ENCODE measurements at regions of chr10 and their contacts with region 1.

Region 1: GRCh38 chr10:67666416-67667034 is 29.5 kb downstream of the CTNNA3 start:
- DNase-seq: no peak
- ATAC-seq: peak; percentile 56 to 59
- H3K4me3 ChIP-seq: no peak overlapping the region
- H3K27ac ChIP-seq: no peak overlapping the region
- H3K4me1 ChIP-seq: peaks cover 2% of the 10 kb centered on the region
- H3K27me3 ChIP-seq: no peaks in the 10 kb centered on the region

Region 2: DNA sequence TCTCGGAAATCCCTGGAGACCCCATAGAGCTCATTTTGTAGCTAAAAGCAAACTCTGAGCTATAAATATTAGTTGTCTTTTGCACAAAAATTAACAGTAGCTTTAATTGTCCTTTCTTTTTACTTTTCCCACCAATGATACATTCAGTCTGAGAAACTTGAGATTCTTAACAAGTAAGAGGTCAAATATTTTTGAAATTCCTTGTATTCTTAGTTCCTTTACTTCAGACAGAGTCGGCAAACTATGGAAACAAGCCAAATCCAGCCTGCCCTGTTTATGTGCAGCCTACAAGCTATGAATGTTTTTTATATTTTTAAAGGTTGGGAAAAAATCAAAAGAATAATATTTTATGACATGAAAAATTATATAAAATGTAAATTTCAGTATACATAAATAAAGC is 117.1 kb before region 1 on chr10:
- intact Hi-C with region 1: no loop called
- DNase-seq: no peak
- ATAC-seq: no peak
- H3K4me3 ChIP-seq: peak overlapping the region; percentile 15
- H3K27ac ChIP-seq: no peak overlapping the region
- H3K4me1 ChIP-seq: no peaks in the 10 kb centered on the region
- H3K27me3 ChIP-seq: no peaks in the 10 kb centered on the region

Region 3: DNA sequence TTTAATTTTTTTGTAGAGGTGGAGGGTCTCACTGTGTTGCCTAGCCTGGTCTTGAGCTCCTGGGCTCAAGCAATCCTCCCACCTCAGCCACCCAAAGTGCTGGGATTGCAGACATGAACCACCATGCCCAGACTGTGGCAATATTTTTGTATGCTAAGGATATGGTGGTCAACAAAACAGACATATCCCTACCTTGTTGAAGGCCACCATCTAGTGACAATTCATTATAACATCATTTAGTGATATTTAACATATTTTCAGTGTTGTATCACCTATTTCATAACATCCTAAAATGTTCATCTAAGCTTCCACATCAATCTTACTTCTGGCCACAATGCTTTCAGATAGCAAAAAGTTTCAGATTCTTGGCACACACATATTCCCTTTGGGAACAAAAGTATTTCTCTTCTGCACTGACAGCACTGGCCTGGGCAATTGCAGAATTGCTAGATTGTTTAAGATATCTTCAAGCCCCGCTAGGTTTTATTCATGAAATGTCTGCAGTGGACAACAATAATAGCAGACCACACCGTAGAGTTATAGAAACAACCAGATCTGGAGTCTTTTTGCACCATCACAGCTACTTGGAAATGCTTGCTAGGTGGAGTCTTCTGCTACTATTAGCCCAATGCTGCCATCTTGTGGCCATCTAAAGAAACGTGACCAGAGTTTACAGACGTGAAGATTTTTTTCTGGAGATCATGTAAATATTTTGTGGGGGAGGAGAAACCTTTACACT is 113.1 kb after region 1 on chr10:
- intact Hi-C with region 1: loop called in 3 of 4 experiments (anchors 5 to 10 kb)
- DNase-seq: peak in 1 of 3 donors; percentile 34
- ATAC-seq: peak; percentile 83 to 84
- H3K4me3 ChIP-seq: no peak overlapping the region
- H3K27ac ChIP-seq: no peak overlapping the region
- H3K4me1 ChIP-seq: no peaks in the 10 kb centered on the region
- H3K27me3 ChIP-seq: no peaks in the 10 kb centered on the region

Region 4: GRCh38 chr10:68364101-68364886 is 697.8 kb after region 1 on chr10:
- intact Hi-C with region 1: no loop called
- DNase-seq: no peak
- ATAC-seq: no peak
- H3K4me3 ChIP-seq: no peak overlapping the region
- H3K27ac ChIP-seq: no peak overlapping the region
- H3K4me1 ChIP-seq: no peaks in the 10 kb centered on the region
- H3K27me3 ChIP-seq: no peaks in the 10 kb centered on the region